Left colon (tissue), 2 donors: ENCODE measurements at regions of chr10 and their contacts with region 1.

Region 1: DNA sequence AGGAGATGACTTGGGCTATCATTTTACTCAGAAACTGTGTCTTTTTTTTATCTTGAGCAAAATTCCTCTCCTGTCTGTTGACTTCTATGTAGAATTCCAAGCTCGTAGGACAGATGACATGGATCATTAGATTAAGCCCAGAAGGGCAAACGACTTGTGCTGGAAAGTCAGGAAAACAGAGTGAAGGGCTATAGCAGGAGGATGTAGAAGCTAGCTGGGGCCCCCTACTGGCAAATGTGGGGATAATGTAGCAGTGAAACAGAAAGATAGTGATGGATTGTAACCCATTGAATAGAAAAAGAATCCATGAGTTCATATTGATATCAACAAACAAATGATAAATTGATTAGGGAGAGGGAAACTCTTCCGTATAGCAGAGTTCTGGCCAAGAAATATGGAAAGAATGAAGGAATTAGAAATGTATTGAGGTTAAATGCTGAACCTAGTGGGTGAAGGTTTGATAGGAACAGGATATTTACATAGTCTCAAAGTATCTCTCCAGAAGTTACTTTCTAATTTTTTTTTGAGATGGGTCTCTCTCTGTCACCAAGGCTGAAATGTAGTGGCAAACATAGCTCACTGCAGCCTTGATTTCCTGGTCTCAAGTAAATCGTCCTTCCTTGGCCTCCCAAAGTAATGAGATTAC is 103.6 kb downstream of the LYZL1 start:
- DNase-seq: peak in 1 of 2 donors; percentile 36
- ATAC-seq: peak; percentile 57

Region 2: DNA sequence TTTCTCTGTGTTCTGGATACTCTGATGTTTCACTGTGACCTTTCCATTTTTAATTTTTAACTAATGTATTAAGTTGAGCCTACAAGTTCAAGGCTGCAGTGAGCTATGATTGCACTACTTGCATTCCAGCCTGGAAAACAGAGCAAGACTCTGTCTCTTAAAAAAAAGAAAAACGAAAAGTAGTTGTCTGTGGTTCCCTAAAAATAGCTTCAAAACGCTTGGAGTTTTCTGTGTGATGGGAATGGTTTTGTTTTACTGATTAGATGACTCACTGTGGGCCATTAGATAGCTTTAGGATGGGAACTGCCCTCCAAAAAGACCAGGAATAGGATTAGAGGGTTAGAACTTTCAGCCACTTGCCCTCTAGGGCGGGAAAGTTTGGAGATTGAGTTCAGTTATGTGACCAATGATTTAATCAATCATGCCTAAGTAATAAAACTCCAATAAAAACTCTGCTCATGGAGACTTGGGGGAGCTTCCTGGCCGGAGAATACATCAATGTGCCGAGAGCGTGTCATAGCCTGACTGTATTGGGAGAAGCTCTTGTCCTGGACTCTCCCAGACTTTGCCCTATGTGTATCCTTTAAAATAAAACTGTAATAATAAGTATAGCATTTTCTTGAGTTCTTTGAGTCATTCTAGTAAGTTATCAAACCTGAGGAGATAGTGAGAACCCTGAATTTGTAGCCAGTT is 43.5 kb after region 1 on chr10:
- intact Hi-C with region 1: loop called in 1 of 2 experiments (anchors 5 kb)
- DNase-seq: no peak
- ATAC-seq: peak; percentile 66

Region 3: DNA sequence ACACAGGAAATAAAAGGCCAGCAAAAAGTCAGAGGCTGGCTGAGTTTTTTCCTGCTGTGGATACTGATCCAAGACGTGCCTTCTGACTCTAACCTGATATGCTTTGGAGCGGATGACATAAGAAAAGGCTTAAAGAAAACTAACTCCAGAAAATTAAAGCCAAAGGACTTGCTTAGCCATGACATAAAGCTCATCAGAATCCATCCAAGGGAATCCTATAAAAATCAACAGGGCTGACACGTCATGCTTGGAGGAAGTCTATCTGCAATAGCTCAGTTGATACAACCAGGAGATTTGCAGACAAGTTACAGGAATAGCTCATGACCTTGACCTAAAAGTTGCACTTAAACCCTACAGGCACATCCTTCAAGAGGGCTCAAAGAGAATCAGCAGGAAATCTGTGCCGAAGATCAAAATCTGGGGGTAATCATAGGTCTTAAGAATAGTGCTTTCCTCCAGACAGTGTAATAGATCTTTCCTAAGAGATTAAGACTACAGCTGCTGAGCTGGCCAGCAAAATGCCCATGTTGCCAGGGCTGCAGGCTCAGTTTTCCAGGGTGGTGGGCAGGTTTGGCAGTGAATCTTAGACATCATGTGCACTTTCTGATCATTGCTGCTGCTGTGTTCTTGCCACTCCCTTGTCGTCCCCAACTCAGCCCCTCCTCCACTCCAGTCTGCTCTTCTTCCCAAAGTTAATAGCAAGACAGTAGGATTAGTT is 353.7 kb after region 1 on chr10:
- intact Hi-C with region 1: no loop called
- DNase-seq: no peak
- ATAC-seq: no peak